ENCODE measurements at regions of chr1 and their contacts with region 1.

Region 1: GRCh38 chr1:1059494-1060280 is 14.4 kb downstream of the RNF223 start:
- DNase-seq: peak; percentile 84
- H3K4me3 Mint-ChIP-seq: peak overlapping the region; percentile 80
- H3K27ac Mint-ChIP-seq: no peak overlapping the region
- H3K4me1 Mint-ChIP-seq: peaks cover 13% of the 10 kb centered on the region
- H3K27me3 Mint-ChIP-seq: peaks cover 28% of the 10 kb centered on the region

Region 2: GRCh38 chr1:983799-984473 is 75.8 kb before region 1 on chr1:
- intact Hi-C with region 1: loop called (anchors 2 kb)
- DNase-seq: no peak
- H3K4me3 Mint-ChIP-seq: no peak overlapping the region
- H3K27ac Mint-ChIP-seq: no peak overlapping the region
- H3K4me1 Mint-ChIP-seq: no peaks in the 10 kb centered on the region
- H3K27me3 Mint-ChIP-seq: peaks cover 22% of the 10 kb centered on the region

Region 3: DNA sequence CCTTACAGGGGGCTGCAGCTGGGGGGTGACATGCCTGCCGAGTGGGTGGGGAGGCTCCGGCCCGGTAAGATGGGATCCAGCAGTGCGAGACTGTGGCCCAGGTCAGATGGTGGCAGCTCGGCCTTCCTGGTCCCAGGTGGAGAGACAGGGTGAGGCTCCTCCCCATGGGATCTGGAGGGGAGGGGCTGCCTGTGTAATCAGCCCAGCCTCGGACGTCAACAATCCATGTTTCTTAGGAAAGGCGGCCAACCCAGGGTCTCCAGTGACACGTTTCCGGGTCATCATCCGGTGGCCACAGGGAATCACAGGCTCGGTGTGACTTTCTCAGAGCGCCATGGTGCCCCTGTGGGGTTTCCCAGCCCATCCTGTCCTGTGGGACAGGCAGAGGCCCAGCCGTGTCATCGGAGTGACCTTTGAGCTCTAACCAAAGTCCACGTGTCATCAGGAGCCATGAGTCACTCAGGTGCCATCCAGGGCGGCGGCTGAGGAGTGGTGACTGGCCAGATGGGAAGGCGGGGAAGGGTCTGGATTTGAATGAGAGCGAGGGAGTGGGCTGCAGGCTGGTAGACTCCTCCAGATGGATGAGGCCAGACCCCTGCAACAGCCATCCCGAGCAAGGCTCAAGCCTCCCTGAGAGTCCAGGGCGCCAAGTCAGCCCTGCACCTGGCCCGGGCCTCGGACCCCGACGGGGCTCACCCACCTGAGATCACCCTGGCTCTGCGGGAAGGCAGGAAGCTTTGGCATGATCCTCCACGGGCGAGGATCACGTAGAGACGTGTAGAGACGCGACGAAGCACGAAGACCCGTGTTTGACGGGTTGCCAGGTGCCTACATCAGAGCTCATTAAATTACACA is 53.2 kb before region 1 on chr1:
- intact Hi-C with region 1: no loop called
- DNase-seq: no peak
- H3K4me3 Mint-ChIP-seq: no peak overlapping the region
- H3K27ac Mint-ChIP-seq: no peak overlapping the region
- H3K4me1 Mint-ChIP-seq: peaks cover 11% of the 10 kb centered on the region
- H3K27me3 Mint-ChIP-seq: peaks cover 28% of the 10 kb centered on the region

Region 4: DNA sequence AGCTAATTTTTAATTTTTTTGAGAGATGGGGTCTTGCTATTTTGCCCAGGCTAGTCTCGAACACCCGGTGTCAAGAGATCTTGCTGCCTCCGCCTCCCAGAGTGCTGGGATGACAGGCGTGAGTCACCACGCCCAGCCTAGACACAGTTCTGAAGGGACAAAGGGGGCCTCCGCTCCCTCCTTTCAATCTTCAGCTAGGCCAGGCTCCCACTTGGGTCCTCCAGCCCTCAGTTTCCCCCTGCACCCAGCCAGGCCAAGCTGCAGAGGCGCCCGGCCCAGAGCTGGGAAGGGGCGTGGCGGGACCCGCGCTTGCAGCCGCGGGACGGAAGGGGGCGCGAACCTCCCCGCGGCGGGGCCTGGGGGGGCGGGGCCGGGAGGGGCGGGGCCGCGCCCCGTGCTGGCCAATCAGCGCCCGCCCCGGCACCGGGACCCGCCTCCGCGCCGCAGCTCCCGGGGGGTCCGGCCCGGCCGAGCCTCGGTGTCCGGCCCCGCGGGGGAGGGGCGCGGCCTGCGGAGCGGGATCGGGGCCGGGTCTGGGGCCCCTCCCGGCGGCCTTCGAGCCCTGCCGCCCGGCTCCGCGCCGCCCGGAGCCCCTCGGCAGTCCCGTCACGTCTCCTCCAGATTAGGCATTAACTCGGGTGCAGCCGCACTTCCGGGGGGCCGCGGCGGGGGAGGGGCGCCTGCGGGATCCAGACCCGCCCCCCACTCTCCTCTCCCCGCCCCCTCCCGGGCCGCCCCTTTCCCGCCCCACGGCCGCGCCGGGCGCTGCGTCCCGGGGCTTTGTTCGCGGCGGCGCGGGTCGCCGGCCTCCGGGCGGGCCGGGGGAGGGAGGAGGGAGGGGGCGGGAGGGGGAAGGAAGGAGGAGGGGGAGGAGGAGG is 40.3 kb before region 1 on chr1:
- intact Hi-C with region 1: loop called (anchors 5 kb)
- DNase-seq: peak; percentile 73
- H3K4me3 Mint-ChIP-seq: peak overlapping the region; percentile 66
- H3K27ac Mint-ChIP-seq: no peak overlapping the region
- H3K4me1 Mint-ChIP-seq: peaks cover 11% of the 10 kb centered on the region
- H3K27me3 Mint-ChIP-seq: peaks cover 17% of the 10 kb centered on the region

Region 5: DNA sequence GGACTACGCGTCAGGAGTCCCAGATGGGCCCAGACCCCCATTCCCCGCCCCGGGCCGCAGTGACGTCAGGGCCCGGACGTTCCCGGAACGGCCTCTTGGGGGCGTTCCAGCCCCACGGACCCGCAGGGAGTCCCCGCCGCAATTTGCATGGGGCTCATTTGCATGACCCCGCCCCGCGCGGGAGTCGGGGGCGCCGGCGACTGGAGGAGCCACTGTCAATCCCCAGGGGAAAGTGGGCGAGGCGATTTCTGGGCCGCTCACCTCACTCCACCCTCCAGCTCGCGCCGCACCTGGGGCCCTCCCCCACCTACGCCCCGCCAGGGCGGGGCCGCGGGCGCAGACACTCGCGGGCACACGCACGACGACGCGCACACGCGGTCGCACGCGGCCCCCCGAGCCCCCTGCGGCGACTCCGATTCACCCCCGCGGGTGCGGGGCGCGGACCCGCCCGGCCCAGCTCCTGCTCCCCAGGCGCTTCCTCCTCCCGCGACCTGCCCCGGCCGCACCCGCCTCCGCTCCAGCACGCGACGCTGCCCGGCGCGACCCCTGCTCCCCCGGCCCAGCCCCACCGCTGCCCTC is 26.6 kb before region 1 on chr1:
- intact Hi-C with region 1: loop called (anchors 1 kb)
- DNase-seq: peak; percentile 78
- H3K4me3 Mint-ChIP-seq: peak overlapping the region; percentile 39
- H3K27ac Mint-ChIP-seq: no peak overlapping the region
- H3K4me1 Mint-ChIP-seq: peaks cover 4% of the 10 kb centered on the region
- H3K27me3 Mint-ChIP-seq: peaks cover 18% of the 10 kb centered on the region

Region 6: DNA sequence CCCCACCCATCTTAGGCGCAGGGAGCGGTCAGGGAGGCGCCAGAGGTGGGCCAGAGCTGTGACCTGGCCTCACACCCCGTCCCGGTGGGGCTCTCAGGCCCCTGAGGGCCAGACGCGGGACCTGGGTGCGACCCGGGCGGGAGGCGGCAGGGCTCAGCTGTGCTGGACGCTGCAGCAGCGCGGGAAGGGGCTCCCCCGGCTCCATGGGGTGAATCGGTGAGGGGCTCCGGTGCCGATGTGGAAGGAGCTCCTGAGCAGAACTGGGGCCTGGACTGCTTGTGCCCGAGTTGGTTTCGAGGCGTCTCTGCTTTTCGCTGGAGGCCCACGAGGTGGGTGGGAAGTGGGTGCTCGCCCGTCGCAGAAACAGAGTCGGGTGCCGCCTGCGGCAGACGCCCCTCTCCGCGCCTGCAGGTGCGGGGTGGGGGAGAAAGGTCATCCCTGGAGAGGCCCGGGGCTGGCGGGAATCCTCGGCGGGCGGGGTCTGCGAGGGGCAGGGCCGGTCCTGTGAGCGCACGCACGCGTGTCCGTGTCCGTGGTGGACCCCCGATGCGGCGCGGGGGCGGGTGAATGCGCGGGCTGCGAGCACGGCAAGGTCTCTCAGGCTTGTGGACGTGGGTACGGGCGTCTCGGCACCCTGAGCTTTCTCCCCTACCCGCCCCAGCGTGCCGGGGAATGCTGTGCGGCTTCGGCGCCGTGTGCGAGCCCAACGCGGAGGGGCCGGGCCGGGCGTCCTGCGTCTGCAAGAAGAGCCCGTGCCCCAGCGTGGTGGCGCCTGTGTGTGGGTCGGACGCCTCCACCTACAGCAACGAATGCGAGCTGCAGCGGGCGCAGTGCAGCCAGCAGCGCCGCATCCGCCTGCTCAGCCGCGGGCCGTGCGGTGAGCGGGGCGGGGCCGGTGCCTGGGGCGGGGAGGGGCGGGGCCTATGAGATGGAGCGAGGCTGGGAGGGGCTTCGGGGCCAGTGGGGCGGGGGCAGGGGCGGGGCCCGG is 19.4 kb before region 1 on chr1:
- intact Hi-C with region 1: loop called (anchors 2 kb)
- DNase-seq: peak; percentile 79
- H3K4me3 Mint-ChIP-seq: peak overlapping the region; percentile 63
- H3K27ac Mint-ChIP-seq: peak overlapping the region; percentile 2
- H3K4me1 Mint-ChIP-seq: peaks cover 11% of the 10 kb centered on the region
- H3K27me3 Mint-ChIP-seq: peaks cover 21% of the 10 kb centered on the region

Region 7: DNA sequence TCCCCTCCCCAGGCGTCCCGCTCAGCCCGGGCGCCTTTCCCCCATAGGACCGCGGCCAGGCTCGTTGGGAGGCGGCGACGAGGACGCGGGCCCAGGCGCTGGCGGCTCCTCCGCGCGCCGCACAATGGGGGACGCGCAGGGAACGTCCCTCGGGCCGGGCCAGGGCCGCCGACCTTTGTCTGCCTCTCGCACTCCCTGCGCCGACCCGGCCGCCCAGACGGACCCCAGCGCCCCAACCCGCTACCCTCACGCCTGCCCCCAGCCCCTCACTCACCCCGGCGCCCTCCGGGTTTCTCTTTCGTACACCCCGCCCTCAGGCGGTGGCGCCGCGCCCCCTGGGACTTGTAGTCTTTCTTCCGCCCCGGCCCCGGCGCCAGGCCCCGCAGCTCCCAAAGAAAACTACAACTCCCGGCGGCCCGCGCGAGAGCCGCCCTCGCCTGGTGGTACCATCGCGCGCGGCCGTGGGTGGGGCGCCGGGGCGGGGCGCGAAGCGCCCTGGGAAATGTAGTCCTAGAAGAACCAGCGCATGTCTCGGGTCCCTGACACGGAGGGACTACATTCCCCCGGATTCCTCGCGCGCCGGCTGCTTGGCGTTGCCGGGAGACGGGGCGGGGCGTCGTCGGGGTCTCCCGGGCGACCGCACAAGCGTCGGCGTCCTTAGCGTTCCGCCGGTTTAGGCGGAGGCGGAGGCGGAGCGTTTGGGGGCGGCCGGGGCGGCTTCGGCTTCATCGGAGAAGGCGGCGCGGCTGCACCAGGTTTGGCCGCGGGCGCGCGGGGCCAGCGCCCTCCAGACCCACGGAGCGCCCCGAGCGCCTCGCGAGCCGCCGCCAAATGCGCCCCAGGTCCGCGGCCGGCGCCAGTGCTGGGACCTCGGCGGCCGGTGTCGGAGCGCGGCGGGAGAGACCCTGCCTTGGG is 56.4 kb after region 1 on chr1 and contains the start of gene C1orf159:
- intact Hi-C with region 1: loop called (anchors 10 kb)
- DNase-seq: peak; percentile 97
- H3K4me3 Mint-ChIP-seq: peak within 1 kb of the TSS; percentile 82
- H3K27ac Mint-ChIP-seq: peak within 1 kb of the TSS; percentile 78
- H3K4me1 Mint-ChIP-seq: peaks cover 8% of the 10 kb centered on the region
- H3K27me3 Mint-ChIP-seq: peaks cover 12% of the 10 kb centered on the region
- total RNA-seq, gene C1orf159: 20.5 and 22.1 TPM in 2 replicates

Region 8: DNA sequence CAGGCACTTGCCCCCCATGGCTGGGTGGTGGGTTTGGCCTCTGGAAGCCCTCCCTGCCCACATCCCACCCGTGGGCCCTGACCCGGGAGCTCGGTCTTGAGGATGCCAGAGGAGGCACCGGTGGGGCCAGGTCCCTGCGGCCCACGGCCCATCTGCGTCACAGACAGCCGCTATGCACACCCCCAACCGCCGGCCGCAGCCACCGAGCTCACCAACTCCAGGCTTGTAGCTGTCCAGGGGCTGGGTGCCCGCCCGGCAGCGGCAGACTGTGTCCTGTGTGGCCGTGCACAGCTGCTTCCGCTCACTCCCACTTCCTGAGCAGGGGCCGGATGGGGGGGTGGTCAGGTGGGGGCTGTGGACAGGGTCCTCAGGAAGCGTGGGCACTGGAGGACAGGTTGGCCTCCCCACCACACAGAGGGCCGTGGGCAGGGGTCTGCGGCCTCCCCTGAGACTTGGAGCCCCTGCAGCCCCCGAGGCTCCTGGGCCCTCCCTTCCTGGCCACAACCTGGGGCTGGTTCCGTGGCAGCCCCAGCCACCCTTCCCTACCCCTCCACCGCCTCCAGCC is 153.2 kb after region 1 on chr1:
- intact Hi-C with region 1: no loop called
- DNase-seq: no peak
- H3K4me3 Mint-ChIP-seq: peak overlapping the region; percentile 77
- H3K27ac Mint-ChIP-seq: no peak overlapping the region
- H3K4me1 Mint-ChIP-seq: peaks cover 37% of the 10 kb centered on the region
- H3K27me3 Mint-ChIP-seq: no peaks in the 10 kb centered on the region

Measured in activated T-helper 2 cell treated with anti-CD3 and anti-CD28 coated beads, Interferon-gamma antibody, Interleukin-2, Interleukin-4, amounts not matched to agents 10 μg/mL and 5 μg/mL and 100 μg/mL, durations not matched to agents 14 hours and 24 hours and 36 hours (primary cell).